PC-9 (cell line): ENCODE measurements at regions of chr2 and their contacts with region 1.

Region 1: DNA sequence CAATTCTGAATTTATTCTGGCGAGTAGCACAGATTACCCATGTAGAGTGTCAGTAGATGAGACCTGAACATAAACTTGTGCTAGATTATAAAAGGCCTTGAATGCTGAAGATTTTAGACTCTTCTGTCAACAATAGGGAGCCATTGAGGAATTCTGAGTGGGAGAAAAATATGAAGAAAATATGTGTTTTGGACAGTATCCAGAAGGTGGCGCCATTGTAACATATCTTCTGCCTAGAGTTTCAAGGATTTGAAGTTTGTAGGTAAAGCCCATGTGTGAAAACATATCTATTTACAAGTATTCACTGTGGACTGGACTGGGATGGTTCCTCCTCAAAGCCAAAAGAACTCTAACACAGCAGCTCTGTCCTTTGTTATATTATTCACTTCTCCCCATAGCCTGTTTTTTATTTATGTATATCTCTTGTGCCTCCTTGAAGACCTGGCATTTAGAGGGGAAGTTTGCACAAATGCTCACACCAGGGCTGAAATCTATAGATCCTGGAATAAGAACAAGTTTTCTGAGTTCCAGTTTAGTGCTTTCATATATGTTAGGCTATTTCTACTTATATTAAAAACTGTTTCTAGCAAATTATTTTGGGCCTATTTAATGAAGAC is 124.9 kb downstream of the RDH14 start:
- DNase-seq: peak; percentile 25 to 45
- H3K4me3 ChIP-seq: no peak overlapping the region
- H3K27ac ChIP-seq: no peak overlapping the region
- H3K4me1 ChIP-seq: no peaks in the 10 kb centered on the region
- H3K27me3 ChIP-seq: no peaks in the 10 kb centered on the region
- CTCF ChIP-seq: peak; percentile 90

Region 2: GRCh38 chr2:19611491-19612332 is 1176.2 kb after region 1 on chr2:
- CTCF ChIA-PET with region 1: no interaction called
- POLR2A ChIA-PET with region 1: no interaction called
- intact Hi-C with region 1: loop called (anchors 5 kb)
- DNase-seq: peak; percentile 58 to 98
- H3K4me3 ChIP-seq: peak overlapping the region; percentile 9; the same call in 1 of the 2 replicates
- H3K27ac ChIP-seq: peak overlapping the region; percentile 98
- H3K4me1 ChIP-seq: peaks cover 85% of the 10 kb centered on the region
- H3K27me3 ChIP-seq: no peaks in the 10 kb centered on the region
- CTCF ChIP-seq: no peak

Region 3: GRCh38 chr2:19667085-19667484 is 1231.6 kb after region 1 on chr2:
- CTCF ChIA-PET with region 1: no interaction called
- POLR2A ChIA-PET with region 1: no interaction called
- intact Hi-C with region 1: loop called (anchors 5 kb)
- DNase-seq: no peak
- H3K4me3 ChIP-seq: no peak overlapping the region
- H3K27ac ChIP-seq: 0 out of 2 replicates have a peak overlapping the region, but pooled peaks have one; percentile 8
- H3K4me1 ChIP-seq: peaks cover 10% of the 10 kb centered on the region
- H3K27me3 ChIP-seq: no peaks in the 10 kb centered on the region
- CTCF ChIP-seq: peak; percentile 63; the same call in 1 of the 2 replicates